ENCODE measurements at regions of chr19 and their contacts with region 1.

Region 1: DNA sequence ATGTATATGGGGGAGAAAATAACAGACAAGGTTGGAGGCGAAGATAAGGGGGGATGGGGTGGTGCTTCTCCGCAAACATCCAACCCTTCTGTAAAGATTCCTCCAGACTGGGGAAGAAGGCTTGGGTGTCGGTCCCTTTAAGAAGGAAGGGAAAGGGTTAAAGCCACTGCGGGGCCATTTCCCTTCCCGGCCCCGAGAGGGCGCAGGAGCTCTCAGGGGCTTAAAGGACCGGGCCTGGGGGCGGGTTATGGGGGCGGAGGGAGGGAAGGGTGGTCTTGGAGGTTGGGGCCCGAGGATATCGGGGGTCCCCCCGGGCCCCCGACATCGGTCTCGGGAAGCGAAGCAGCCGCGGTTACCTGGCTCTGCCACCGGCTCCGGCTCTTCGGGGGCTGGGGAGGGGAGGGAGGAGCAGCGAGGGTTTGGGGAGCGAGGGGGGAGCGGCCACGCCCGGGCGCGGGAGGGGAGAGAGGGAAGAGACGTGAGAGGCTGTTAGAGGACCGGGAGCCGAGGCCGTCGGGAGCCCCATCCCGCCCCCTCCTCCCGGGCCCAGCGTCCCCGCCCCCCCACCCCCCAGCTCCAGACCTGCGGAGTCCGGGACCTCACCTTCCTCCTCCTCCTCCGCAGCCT is 2.8 kb downstream of the TNNT1 start:
- DNase-seq: no peak
- ATAC-seq: peak; percentile 17; the same call in 2 of the 3 replicates
- H3K4me3 ChIP-seq: peak overlapping the region in 2 of 3 experiments; percentile 36 to 46; a peak in 3 of 6 replicates
- H3K27ac ChIP-seq: no peak overlapping the region
- H3K4me1 ChIP-seq: peaks cover 20% of the 10 kb centered on the region; the same call in 1 of the 2 replicates
- H3K27me3 ChIP-seq: peaks cover 0 to 23% of the 10 kb centered on the region in 2 experiments; a peak in 2 of 5 replicates
- CTCF ChIP-seq: peak; percentile 62
- EP300 ChIP-seq: no peak
- POLR2A ChIP-seq: no peak
- RAD21 ChIP-seq: no peak

Region 2: GRCh38 chr19:55160128-55160985 is 14.2 kb after region 1 on chr19:
- CTCF ChIA-PET with region 1: interaction called, 15 read pairs
- POLR2A ChIA-PET with region 1: interaction called, 3 read pairs
- in situ Hi-C with region 1: no loop called
- intact Hi-C with region 1: loop called (anchors 2 kb)
- DNase-seq: peak; percentile 81
- ATAC-seq: peak; percentile 79
- H3K4me3 ChIP-seq: no peak overlapping the region
- H3K27ac ChIP-seq: no peak overlapping the region
- H3K4me1 ChIP-seq: peaks cover 20% of the 10 kb centered on the region
- H3K27me3 ChIP-seq: peaks cover 0 to 31% of the 10 kb centered on the region in 2 experiments; a peak in 2 of 5 replicates
- CTCF ChIP-seq: peak; percentile 98
- EP300 ChIP-seq: no peak
- POLR2A ChIP-seq: no peak
- RAD21 ChIP-seq: peak; percentile 84

Region 3: GRCh38 chr19:55418185-55418584 is 272.0 kb after region 1 on chr19:
- CTCF ChIA-PET with region 1: interaction called, 14 read pairs
- POLR2A ChIA-PET with region 1: no interaction called
- in situ Hi-C with region 1: no loop called
- intact Hi-C with region 1: loop called (anchors 5 kb)
- DNase-seq: peak; percentile 70
- ATAC-seq: peak; percentile 92
- H3K4me3 ChIP-seq: no peak overlapping the region
- H3K27ac ChIP-seq: no peak overlapping the region
- H3K4me1 ChIP-seq: peaks cover 10% of the 10 kb centered on the region
- H3K27me3 ChIP-seq: peaks cover 0 to 11% of the 10 kb centered on the region in 2 experiments; a peak in 1 of 5 replicates
- CTCF ChIP-seq: peak; percentile 93
- EP300 ChIP-seq: no peak
- POLR2A ChIP-seq: no peak
- RAD21 ChIP-seq: peak; percentile 84

Region 4: GRCh38 chr19:55503502-55504251 is 357.5 kb after region 1 on chr19:
- CTCF ChIA-PET with region 1: interaction called, 10 read pairs
- POLR2A ChIA-PET with region 1: no interaction called
- in situ Hi-C with region 1: no loop called
- intact Hi-C with region 1: no loop called
- DNase-seq: peak; percentile 64
- ATAC-seq: peak; percentile 91
- H3K4me3 ChIP-seq: peak overlapping the region in 2 of 3 experiments; percentile 39 to 54; a peak in 3 of 6 replicates
- H3K27ac ChIP-seq: no peak overlapping the region
- H3K4me1 ChIP-seq: peaks cover 19% of the 10 kb centered on the region
- H3K27me3 ChIP-seq: peaks cover 3 to 41% of the 10 kb centered on the region in 2 experiments; a peak in 4 of 5 replicates
- CTCF ChIP-seq: peak; percentile 99
- EP300 ChIP-seq: no peak
- POLR2A ChIP-seq: no peak
- RAD21 ChIP-seq: peak; percentile 96